ENCODE measurements at regions of chrX and their contacts with region 1.

Region 1: DNA sequence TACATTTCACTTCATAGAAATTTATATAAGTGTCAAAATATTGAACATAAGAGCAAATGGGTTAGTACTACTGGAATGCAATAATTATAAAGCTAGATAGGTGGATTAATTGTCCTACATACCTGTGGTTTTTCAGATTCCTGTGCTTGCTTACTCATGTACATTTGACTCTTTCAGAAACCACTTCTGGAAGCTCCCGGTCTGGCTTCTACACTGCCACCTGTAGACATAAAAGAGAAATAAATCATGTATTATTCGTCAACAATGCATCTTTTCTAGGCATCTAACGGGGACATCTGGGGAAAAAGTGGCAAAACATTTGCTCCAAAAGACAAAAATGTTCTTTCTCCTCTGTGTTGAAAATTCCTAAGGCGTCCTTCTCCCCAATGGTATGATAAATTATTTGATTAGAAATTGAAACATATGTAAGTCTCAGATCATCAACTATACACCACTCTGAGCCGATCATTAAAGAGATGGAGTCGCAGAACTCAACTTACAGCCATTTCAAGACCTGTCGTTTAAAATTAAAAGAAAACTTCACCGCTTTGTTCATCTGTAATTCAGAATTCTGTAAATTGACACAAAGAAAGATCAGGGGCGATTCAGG is 648.7 kb upstream of the DIPK2B start:
- DNase-seq: peak; percentile 85
- ATAC-seq: peak; percentile 32
- H3K4me3 ChIP-seq: peak overlapping the region; percentile 79
- H3K27ac ChIP-seq: peak overlapping the region; percentile 83
- H3K4me1 ChIP-seq: peaks cover 49% of the 10 kb centered on the region
- H3K27me3 ChIP-seq: no peaks in the 10 kb centered on the region
- CTCF ChIP-seq: peak; percentile 67

Region 2: GRCh38 chrX:45801554-45801953 is 47.8 kb before region 1 on chrX:
- CTCF ChIA-PET with region 1: no interaction called
- POLR2A ChIA-PET with region 1: interaction called, 4 read pairs
- intact Hi-C with region 1: loop called (anchors 2 kb)
- DNase-seq: peak; percentile 71
- ATAC-seq: peak; percentile 52
- H3K4me3 ChIP-seq: peak overlapping the region; percentile 58
- H3K27ac ChIP-seq: peak overlapping the region; percentile 98
- H3K4me1 ChIP-seq: peaks cover 65% of the 10 kb centered on the region
- H3K27me3 ChIP-seq: no peaks in the 10 kb centered on the region
- CTCF ChIP-seq: peak; percentile 59

Region 3: GRCh38 chrX:46044486-46044885 is 195.1 kb after region 1 on chrX:
- CTCF ChIA-PET with region 1: no interaction called
- POLR2A ChIA-PET with region 1: no interaction called
- intact Hi-C with region 1: loop called (anchors 10 kb)
- DNase-seq: peak; percentile 61
- ATAC-seq: peak; percentile 55
- H3K4me3 ChIP-seq: no peak overlapping the region
- H3K27ac ChIP-seq: peak overlapping the region; percentile 90
- H3K4me1 ChIP-seq: peaks cover 17% of the 10 kb centered on the region
- H3K27me3 ChIP-seq: no peaks in the 10 kb centered on the region
- CTCF ChIP-seq: no peak

Region 4: DNA sequence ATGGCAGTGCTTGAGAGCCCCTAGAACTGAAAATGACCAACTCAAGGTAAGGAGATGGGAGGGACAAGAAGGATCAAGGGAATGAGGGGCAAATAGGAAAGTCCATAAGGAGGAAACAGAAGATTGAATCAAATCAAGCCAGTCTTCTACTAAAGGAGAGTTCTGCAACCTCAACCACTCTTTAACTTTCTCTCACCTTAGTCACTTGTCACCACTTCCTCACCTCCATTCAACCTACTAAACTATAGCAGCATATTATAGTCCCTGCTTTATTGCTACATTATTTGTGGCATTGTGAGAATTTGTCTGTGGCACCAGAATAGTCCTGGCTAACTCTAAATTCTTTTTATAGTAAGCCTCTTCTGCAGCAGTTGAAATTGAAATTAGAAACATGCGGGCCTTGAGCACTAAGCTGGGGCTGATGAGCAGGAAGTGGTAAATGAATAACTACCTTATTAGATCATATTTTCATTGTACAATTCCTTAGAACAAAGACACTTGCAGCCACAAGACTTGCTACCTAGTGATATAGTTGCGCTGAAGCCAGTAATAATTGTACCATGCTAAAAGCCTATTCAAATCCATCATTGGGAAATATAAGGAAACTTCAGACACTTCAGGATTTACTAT is 359.0 kb after region 1 on chrX:
- CTCF ChIA-PET with region 1: no interaction called
- POLR2A ChIA-PET with region 1: interaction called, 3 read pairs
- intact Hi-C with region 1: loop called (anchors 2 kb)
- DNase-seq: peak; percentile 60
- ATAC-seq: peak; percentile 33; the same call in 1 of the 2 replicates
- H3K4me3 ChIP-seq: no peak overlapping the region
- H3K27ac ChIP-seq: peak overlapping the region; percentile 70
- H3K4me1 ChIP-seq: peaks cover 44% of the 10 kb centered on the region
- H3K27me3 ChIP-seq: no peaks in the 10 kb centered on the region
- CTCF ChIP-seq: no peak

Region 5: GRCh38 chrX:46325312-46325877 is 476.0 kb after region 1 on chrX:
- CTCF ChIA-PET with region 1: no interaction called
- POLR2A ChIA-PET with region 1: no interaction called
- intact Hi-C with region 1: loop called (anchors 5 kb)
- DNase-seq: peak; percentile 96
- ATAC-seq: peak; percentile 83
- H3K4me3 ChIP-seq: peak overlapping the region; percentile 64
- H3K27ac ChIP-seq: peak overlapping the region; percentile 98
- H3K4me1 ChIP-seq: peaks cover 52% of the 10 kb centered on the region
- H3K27me3 ChIP-seq: no peaks in the 10 kb centered on the region
- CTCF ChIP-seq: no peak

Measured in PC-3 (cell line).